ENCODE measurements at regions of chr15 and their contacts with region 1.

Region 1: DNA sequence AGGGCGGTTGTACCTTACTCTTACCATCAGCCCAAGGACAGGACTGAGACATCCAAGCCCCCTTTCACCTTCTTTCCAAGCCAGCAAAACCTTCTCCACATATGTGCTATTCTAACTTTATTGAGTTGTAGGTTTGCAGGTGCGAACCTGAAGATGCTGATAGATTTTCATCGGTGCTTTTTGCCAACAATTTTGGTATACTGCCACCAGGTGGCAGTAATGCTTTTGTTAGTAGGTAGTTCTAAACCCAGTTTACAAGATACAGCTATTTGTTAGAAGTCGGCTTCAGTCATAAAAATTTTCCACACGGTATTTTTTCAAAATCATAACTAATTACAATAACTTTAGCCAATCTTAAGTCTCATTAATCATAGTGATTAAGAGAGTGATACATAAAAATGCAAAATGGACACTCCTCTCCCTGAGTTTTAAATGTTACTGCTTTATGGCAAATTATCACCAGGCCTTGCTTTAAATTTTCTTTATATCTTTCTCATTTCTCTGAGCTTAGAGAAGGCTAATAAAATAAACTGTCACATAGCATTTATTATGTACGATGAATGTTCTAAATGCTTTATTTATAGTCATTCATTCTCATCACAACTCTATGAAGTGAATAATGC is 636 bp downstream of the TBC1D21 start:
- DNase-seq: no peak
- H3K4me3 ChIP-seq: no peak overlapping the region
- H3K27ac ChIP-seq: no peak overlapping the region
- H3K4me1 ChIP-seq: no peaks in the 10 kb centered on the region
- H3K27me3 ChIP-seq: peaks cover 0 to 3% (median 0%) of the 10 kb centered on the region in 4 experiments; a peak in 1 of 7 replicates
- CTCF ChIP-seq: peak in 2 of 3 experiments; percentile 61 to 69; a peak in 3 of 4 replicates
- EP300 ChIP-seq: no peak
- POLR2A ChIP-seq: no peak
- RAD21 ChIP-seq: peak; percentile 64 to 74

Region 2: GRCh38 chr15:73838831-73839426 is 35.1 kb before region 1 on chr15:
- CTCF ChIA-PET with region 1: interaction called, 12 read pairs
- POLR2A ChIA-PET with region 1: no interaction called
- DNase-seq: no peak
- H3K4me3 ChIP-seq: no peak overlapping the region
- H3K27ac ChIP-seq: no peak overlapping the region
- H3K4me1 ChIP-seq: peaks cover 0 to 11% (median 4%) of the 10 kb centered on the region in 4 experiments; a peak in 5 of 7 replicates
- H3K27me3 ChIP-seq: peaks cover 0 to 2% (median under 1%) of the 10 kb centered on the region in 4 experiments; a peak in 1 of 7 replicates
- CTCF ChIP-seq: no peak
- EP300 ChIP-seq: no peak
- POLR2A ChIP-seq: no peak
- RAD21 ChIP-seq: no peak

Region 3: GRCh38 chr15:73858062-73858461 is 15.9 kb before region 1 on chr15:
- CTCF ChIA-PET with region 1: interaction called, 36 read pairs
- POLR2A ChIA-PET with region 1: interaction called, 3 read pairs
- DNase-seq: no peak
- H3K4me3 ChIP-seq: no peak overlapping the region
- H3K27ac ChIP-seq: no peak overlapping the region
- H3K4me1 ChIP-seq: peaks cover 0 to 4% (median 2%) of the 10 kb centered on the region in 4 experiments; a peak in 4 of 7 replicates
- H3K27me3 ChIP-seq: no peaks in the 10 kb centered on the region; a peak in 2 of 7 replicates
- CTCF ChIP-seq: no peak
- EP300 ChIP-seq: no peak
- POLR2A ChIP-seq: no peak
- RAD21 ChIP-seq: no peak

Region 4: GRCh38 chr15:73891328-73892315 is 17.6 kb after region 1 on chr15:
- CTCF ChIA-PET with region 1: interaction called, 39 read pairs
- POLR2A ChIA-PET with region 1: no interaction called
- DNase-seq: no peak
- H3K4me3 ChIP-seq: no peak overlapping the region
- H3K27ac ChIP-seq: no peak overlapping the region
- H3K4me1 ChIP-seq: no peaks in the 10 kb centered on the region
- H3K27me3 ChIP-seq: no peaks in the 10 kb centered on the region; a peak in 1 of 7 replicates
- CTCF ChIP-seq: no peak
- EP300 ChIP-seq: no peak
- POLR2A ChIP-seq: no peak
- RAD21 ChIP-seq: no peak

Region 5: DNA sequence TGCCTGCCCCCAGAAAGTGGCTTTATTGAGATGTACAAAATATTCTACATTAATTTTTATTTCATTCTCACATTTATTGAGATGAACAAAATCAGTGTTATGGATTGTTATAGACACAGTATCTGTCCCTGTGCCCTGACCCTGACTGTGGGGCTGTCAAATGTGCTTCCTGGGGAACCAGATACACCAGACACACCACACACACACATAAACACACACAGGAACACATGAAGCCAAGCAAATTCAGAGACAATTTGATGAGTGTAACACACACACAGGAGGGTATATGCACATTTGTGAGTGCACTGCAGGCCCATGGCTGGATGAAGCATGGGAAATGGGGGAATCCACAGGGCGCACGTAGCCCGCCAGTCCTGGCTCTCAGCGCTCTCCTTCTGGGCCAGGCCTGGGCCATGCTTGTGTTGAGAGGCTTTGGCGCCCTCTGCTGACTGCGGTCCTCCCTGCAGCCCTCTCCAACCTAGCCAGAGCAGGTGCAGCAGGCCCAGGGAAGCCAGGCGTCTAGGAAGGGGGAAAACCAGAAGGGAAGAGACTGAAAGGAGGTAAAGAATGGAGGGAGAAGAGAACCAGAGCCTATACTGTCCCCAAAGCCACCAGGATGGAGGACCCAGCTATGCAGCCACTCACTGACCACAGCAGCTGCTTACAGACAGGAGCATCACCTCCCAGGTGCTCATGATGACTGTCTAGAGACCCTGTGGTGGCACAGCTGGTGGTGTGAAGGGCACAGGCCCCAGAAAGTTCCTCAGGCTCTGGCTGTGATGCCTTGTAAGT is 34.2 kb after region 1 on chr15:
- CTCF ChIA-PET with region 1: interaction called, 113 read pairs
- POLR2A ChIA-PET with region 1: no interaction called
- DNase-seq: peak in 1 of 2 experiments; percentile 97
- H3K4me3 ChIP-seq: no peak overlapping the region
- H3K27ac ChIP-seq: no peak overlapping the region
- H3K4me1 ChIP-seq: peaks cover 0 to 5% (median 0%) of the 10 kb centered on the region in 4 experiments; a peak in 1 of 7 replicates
- H3K27me3 ChIP-seq: no peaks in the 10 kb centered on the region
- CTCF ChIP-seq: peak; percentile 96 to 98 (median 96)
- EP300 ChIP-seq: no peak
- POLR2A ChIP-seq: no peak
- RAD21 ChIP-seq: peak; percentile 94

Region 6: GRCh38 chr15:73927476-73928240 is 53.7 kb after region 1 on chr15:
- CTCF ChIA-PET with region 1: interaction called, 25 read pairs
- POLR2A ChIA-PET with region 1: no interaction called
- DNase-seq: peak in 1 of 2 experiments; percentile 86
- H3K4me3 ChIP-seq: peak overlapping the region; percentile 35 to 71 (median 53)
- H3K27ac ChIP-seq: no peak overlapping the region
- H3K4me1 ChIP-seq: peaks cover 0 to 35% (median 30%) of the 10 kb centered on the region in 4 experiments; a peak in 6 of 7 replicates
- H3K27me3 ChIP-seq: peaks cover 0 to 6% (median 2%) of the 10 kb centered on the region in 4 experiments; a peak in 3 of 7 replicates
- CTCF ChIP-seq: peak; percentile 33 to 65 (median 47)
- EP300 ChIP-seq: no peak
- POLR2A ChIP-seq: no peak
- RAD21 ChIP-seq: peak in 1 of 2 experiments; percentile 2; a peak in 1 of 4 replicates

Region 7: DNA sequence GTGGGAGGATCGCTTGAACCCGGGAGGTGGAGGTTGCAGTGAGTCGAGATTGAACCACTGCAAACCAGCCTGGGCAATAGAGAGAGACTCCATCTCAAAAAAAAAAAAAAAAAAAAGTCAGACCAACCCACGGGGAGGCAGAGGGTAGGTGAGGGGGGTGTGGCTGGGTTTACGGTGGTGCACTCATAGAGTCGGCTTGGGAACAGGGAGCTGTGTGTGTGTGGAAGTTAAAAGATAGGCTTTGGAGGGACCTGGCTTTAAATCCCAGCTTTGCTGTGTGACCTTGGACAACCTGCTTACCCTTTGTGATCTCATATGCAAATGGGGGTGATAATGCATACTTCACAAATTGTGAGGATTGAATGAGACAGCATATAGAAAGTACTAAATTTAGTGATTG is 246.4 kb after region 1 on chr15:
- CTCF ChIA-PET with region 1: no interaction called
- POLR2A ChIA-PET with region 1: no interaction called
- DNase-seq: no peak
- H3K4me3 ChIP-seq: no peak overlapping the region
- H3K27ac ChIP-seq: no peak overlapping the region
- H3K4me1 ChIP-seq: peaks cover 0 to 14% (median 11%) of the 10 kb centered on the region in 4 experiments; a peak in 6 of 7 replicates
- H3K27me3 ChIP-seq: peaks cover 0 to 4% (median under 1%) of the 10 kb centered on the region in 4 experiments; a peak in 2 of 7 replicates
- CTCF ChIP-seq: no peak
- EP300 ChIP-seq: no peak
- POLR2A ChIP-seq: no peak
- RAD21 ChIP-seq: no peak